Prostate gland (tissue), 2 donors: ENCODE measurements at regions of chr10 and their contacts with region 1.

Region 1: DNA sequence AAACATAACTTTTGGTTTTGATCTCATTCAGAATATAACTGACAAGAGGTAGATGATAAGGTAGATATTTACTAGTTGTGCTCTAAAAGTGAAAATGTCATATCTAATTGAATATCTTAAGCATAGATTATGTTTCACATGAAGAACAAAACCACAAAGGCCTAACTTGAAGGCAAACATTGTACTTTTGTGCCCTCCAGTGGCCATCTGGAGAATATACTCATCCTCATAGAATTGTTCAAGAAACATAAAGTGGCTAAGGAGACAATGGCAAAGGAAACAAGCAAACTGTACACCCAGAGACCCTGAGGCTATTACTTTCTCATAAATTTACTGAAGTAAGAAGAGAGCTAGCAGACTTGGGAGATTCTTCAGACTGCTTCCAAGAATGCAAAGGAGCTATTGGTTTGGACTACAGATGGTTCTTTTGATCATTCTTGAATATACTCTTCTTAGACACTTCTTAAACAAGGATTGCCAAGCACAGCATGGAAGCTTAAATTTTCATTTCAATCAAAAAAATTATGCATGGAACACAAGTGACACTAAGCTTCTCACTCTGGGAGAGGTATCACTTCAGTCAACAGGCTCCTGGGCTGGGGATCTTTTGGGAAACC is 98.2 kb upstream of the DKK1 start:
- DNase-seq: peak; percentile 37
- H3K4me3 ChIP-seq: no peak overlapping the region
- H3K27ac ChIP-seq: no peak overlapping the region
- H3K4me1 ChIP-seq: no peaks in the 10 kb centered on the region
- H3K27me3 ChIP-seq: no peaks in the 10 kb centered on the region
- CTCF ChIP-seq: peak in 3 of 4 experiments; percentile 64 to 78 (median 70)
- POLR2A ChIP-seq: no peak

Region 2: DNA sequence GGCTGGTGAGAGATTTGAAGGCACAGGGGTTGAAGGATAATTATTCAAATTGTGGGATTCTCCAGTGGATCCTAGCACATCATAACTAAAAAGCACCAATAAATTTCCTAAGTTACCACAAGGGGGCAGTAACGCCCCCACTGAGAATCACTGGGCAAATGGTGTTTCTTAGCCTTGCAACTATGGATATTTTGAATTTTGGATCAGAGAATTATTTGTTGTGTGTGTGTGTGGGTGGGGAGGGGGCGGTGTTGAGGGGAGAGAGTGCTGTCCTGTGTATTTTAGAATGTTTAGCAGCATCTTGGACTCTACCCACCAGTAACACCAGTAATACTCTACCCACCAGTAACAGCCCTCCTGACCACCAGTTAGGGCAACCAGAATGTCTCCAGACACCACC is 1204.9 kb before region 1 on chr10:
- intact Hi-C with region 1: loop called (anchors 5 kb)
- DNase-seq: no peak
- H3K4me3 ChIP-seq: no peak overlapping the region
- H3K27ac ChIP-seq: no peak overlapping the region
- H3K4me1 ChIP-seq: no peaks in the 10 kb centered on the region
- H3K27me3 ChIP-seq: no peaks in the 10 kb centered on the region
- CTCF ChIP-seq: peak; percentile 40 to 76 (median 52)
- POLR2A ChIP-seq: no peak

Region 3: DNA sequence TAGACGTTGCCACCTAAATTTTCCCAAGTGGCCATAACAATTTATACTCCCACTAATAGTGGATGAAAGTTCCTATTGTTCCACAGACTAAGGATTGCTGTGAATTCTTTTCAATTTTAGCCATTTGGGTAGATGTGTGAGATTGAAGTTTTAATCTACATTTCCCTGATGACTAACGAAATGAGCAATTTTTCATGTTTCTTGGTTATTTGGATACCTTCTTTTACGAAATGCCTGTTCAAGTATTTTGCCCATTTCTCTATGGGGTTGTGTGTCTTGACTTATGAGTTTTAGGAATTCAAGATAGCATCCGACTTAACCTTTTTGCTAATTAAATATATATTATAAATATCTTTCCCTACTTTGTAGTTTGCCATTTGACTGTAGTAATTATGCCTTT is 1157.9 kb before region 1 on chr10:
- intact Hi-C with region 1: loop called (anchors 5 kb)
- DNase-seq: no peak
- H3K4me3 ChIP-seq: no peak overlapping the region
- H3K27ac ChIP-seq: no peak overlapping the region
- H3K4me1 ChIP-seq: no peaks in the 10 kb centered on the region
- H3K27me3 ChIP-seq: no peaks in the 10 kb centered on the region
- CTCF ChIP-seq: no peak
- POLR2A ChIP-seq: no peak

Region 4: GRCh38 chr10:52258799-52259425 is 43.1 kb after region 1 on chr10:
- intact Hi-C with region 1: no loop called
- DNase-seq: no peak
- H3K4me3 ChIP-seq: no peak overlapping the region
- H3K27ac ChIP-seq: no peak overlapping the region
- H3K4me1 ChIP-seq: no peaks in the 10 kb centered on the region
- H3K27me3 ChIP-seq: no peaks in the 10 kb centered on the region
- CTCF ChIP-seq: no peak
- POLR2A ChIP-seq: no peak